ENCODE measurements at regions of chr4 and their contacts with region 1.

Region 1: GRCh38 chr4:167290678-167291077 is 56.4 kb upstream of the SPOCK3 start:
- DNase-seq: peak; percentile 42
- ATAC-seq: no peak
- H3K4me3 ChIP-seq: no peak overlapping the region
- H3K27ac ChIP-seq: no peak overlapping the region
- H3K4me1 ChIP-seq: no peaks in the 10 kb centered on the region
- H3K27me3 ChIP-seq: no peaks in the 10 kb centered on the region
- CTCF ChIP-seq: peak; percentile 63

Region 2: DNA sequence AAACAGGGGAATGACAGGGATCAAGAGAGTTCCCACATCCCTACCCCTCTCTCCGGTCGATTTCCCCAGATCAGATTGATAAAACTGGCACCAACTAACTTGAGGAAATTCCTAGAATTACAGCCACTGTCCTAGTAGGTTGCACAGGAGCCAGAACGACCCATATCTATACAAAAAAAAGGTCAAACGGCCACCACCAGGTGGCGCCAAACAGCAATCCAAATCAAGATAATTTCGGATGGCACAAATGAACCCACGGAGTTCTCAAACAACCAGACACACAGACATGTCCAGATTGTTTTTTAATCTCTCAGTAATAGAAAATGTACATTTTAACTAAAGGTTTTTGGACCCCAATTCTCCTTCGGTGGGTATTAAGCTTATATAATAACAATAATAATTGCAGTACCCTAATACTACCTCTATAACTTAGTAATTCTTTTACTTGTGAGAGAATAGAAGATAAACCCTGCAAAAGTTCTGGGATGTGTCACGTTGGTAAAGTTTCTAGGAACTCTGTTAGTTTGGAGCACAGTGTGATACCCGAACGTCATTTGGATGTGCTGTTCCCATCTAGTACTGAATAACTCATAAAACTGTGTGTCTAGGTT is 269.0 kb before region 1 on chr4:
- CTCF ChIA-PET with region 1: no interaction called
- POLR2A ChIA-PET with region 1: no interaction called
- intact Hi-C with region 1: loop called (anchors 1 kb)
- DNase-seq: peak; percentile 74
- ATAC-seq: peak; percentile 63
- H3K4me3 ChIP-seq: no peak overlapping the region
- H3K27ac ChIP-seq: no peak overlapping the region
- H3K4me1 ChIP-seq: peaks cover 27% of the 10 kb centered on the region
- H3K27me3 ChIP-seq: no peaks in the 10 kb centered on the region
- CTCF ChIP-seq: peak; percentile 84

Region 3: GRCh38 chr4:167100120-167100519 is 190.6 kb before region 1 on chr4:
- CTCF ChIA-PET with region 1: no interaction called
- POLR2A ChIA-PET with region 1: no interaction called
- intact Hi-C with region 1: loop called (anchors 10 kb)
- DNase-seq: peak; percentile 73
- ATAC-seq: peak; percentile 100
- H3K4me3 ChIP-seq: no peak overlapping the region
- H3K27ac ChIP-seq: no peak overlapping the region
- H3K4me1 ChIP-seq: peaks cover 4% of the 10 kb centered on the region
- H3K27me3 ChIP-seq: no peaks in the 10 kb centered on the region
- CTCF ChIP-seq: no peak

Region 4: GRCh38 chr4:167456619-167457018 is 165.9 kb after region 1 on chr4:
- CTCF ChIA-PET with region 1: no interaction called
- POLR2A ChIA-PET with region 1: no interaction called
- intact Hi-C with region 1: no loop called
- DNase-seq: no peak
- ATAC-seq: no peak
- H3K4me3 ChIP-seq: no peak overlapping the region
- H3K27ac ChIP-seq: no peak overlapping the region
- H3K4me1 ChIP-seq: no peaks in the 10 kb centered on the region
- H3K27me3 ChIP-seq: no peaks in the 10 kb centered on the region
- CTCF ChIP-seq: no peak

Measured in PC-3 (cell line).